MCF 10A (cell line): ENCODE measurements at regions of chr1 and their contacts with region 1.

Region 1: GRCh38 chr1:183915625-183916510 is 110.9 kb downstream of the RGL1 start:
- DNase-seq: peak; percentile 99
- H3K4me3 Mint-ChIP-seq: peak overlapping the region; percentile 27
- H3K27ac Mint-ChIP-seq: peak overlapping the region; percentile 55
- H3K4me1 Mint-ChIP-seq: peaks cover 13% of the 10 kb centered on the region
- H3K27me3 Mint-ChIP-seq: no peaks in the 10 kb centered on the region
- CTCF ChIP-seq: peak; percentile 90

Region 2: GRCh38 chr1:183609313-183609712 is 306.6 kb before region 1 on chr1:
- CTCF ChIA-PET with region 1: interaction called, 7 read pairs
- POLR2A ChIA-PET with region 1: interaction called, 6 read pairs
- intact Hi-C with region 1: loop called (anchors 1 kb)
- DNase-seq: peak; percentile 87
- H3K4me3 Mint-ChIP-seq: peak overlapping the region; percentile 38
- H3K27ac Mint-ChIP-seq: peak overlapping the region; percentile 99
- H3K4me1 Mint-ChIP-seq: peaks cover 31% of the 10 kb centered on the region
- H3K27me3 Mint-ChIP-seq: no peaks in the 10 kb centered on the region
- CTCF ChIP-seq: peak; percentile 69

Region 3: GRCh38 chr1:183646776-183647175 is 269.1 kb before region 1 on chr1:
- CTCF ChIA-PET with region 1: interaction called, 225 read pairs
- POLR2A ChIA-PET with region 1: interaction called, 3 read pairs
- intact Hi-C with region 1: no loop called
- DNase-seq: no peak
- H3K4me3 Mint-ChIP-seq: no peak overlapping the region
- H3K27ac Mint-ChIP-seq: no peak overlapping the region
- H3K4me1 Mint-ChIP-seq: no peaks in the 10 kb centered on the region
- H3K27me3 Mint-ChIP-seq: no peaks in the 10 kb centered on the region
- CTCF ChIP-seq: no peak

Region 4: DNA sequence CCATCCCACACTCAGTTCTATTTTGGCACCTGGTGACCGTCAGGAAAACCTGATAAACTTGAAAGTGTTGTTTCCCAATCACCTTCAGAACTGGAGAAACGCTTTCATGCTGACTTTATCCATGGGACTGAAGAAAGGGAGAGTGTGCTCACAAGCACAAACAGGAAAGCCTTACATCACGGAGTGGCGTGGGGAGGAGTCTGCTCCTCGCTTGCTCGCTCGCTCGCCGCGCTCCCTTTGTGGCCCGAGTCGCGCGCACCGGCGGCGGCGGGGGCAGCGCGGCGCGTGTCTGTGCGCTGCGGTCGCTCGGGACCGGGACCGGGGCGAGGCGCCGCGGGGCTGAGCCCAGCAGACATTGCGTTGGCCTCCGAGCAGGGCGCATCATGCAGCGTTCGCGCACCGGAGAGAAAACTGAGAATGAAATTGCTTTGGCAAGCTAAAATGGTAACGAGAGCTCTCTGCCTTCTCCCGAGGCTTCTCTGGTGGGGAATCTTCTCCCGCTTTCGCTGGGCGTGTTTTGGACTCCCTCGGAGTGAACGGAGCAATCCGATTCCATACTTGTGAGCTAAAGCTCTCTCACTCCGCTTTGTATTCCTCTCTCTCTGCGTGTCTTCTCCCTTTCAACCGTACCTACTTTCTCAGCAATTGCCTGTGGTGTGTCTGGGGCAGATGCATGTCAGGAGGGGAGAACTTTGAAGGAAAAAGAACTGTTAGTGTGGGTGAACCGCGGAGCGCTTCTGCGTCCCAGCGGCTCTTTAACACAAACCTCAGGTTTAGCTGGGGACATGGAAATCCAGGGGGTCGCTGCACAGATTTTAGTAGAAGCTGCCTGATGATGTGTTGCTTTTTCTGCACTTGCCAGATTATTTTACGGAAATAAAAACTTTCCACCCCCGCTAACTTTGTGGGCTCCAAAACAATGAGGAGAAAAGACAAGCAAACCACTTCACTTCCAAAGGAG is 110.7 kb before region 1 on chr1 and contains the start of gene RGL1:
- CTCF ChIA-PET with region 1: interaction called, 21 read pairs
- POLR2A ChIA-PET with region 1: interaction called, 3 read pairs
- intact Hi-C with region 1: no loop called
- DNase-seq: peak; percentile 73
- H3K4me3 Mint-ChIP-seq: peak within 1 kb of the TSS; percentile 84
- H3K27ac Mint-ChIP-seq: peak within 1 kb of the TSS; percentile 29
- H3K4me1 Mint-ChIP-seq: peaks cover 17% of the 10 kb centered on the region
- H3K27me3 Mint-ChIP-seq: no peaks in the 10 kb centered on the region
- CTCF ChIP-seq: no peak
- total RNA-seq, gene RGL1: 2.1 and 2.3 TPM in 2 replicates

Region 5: DNA sequence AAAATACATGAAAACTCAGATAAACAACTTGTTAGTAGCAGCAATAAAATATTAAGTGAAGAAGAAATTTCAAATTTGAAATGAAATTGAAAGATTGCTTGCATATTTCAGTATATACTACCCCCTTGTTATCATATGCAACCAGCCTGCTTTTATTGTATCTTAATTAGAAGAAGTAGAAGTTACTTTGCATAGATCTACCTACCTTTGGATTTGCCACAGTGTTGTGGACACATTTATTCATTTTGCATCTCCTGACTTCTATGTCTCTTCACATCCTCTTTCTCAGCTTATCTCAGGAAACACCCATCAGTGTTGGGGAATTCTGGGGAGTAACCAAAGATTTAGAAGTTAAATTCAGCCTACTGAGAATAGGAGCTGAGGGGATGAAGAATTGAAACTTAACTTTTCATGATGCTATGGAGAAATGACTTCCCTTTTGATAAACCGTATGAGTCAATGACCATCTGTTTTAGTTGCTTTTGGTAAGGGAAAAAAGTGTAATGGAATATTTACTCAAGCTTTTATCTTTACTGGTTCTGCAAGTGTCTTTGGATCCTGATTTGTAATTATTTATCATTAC is 14.0 kb before region 1 on chr1:
- CTCF ChIA-PET with region 1: interaction called, 29 read pairs
- POLR2A ChIA-PET with region 1: interaction called, 3 read pairs
- intact Hi-C with region 1: no loop called
- DNase-seq: no peak
- H3K4me3 Mint-ChIP-seq: no peak overlapping the region
- H3K27ac Mint-ChIP-seq: no peak overlapping the region
- H3K4me1 Mint-ChIP-seq: peaks cover under 1% of the 10 kb centered on the region
- H3K27me3 Mint-ChIP-seq: no peaks in the 10 kb centered on the region
- CTCF ChIP-seq: no peak

Region 6: DNA sequence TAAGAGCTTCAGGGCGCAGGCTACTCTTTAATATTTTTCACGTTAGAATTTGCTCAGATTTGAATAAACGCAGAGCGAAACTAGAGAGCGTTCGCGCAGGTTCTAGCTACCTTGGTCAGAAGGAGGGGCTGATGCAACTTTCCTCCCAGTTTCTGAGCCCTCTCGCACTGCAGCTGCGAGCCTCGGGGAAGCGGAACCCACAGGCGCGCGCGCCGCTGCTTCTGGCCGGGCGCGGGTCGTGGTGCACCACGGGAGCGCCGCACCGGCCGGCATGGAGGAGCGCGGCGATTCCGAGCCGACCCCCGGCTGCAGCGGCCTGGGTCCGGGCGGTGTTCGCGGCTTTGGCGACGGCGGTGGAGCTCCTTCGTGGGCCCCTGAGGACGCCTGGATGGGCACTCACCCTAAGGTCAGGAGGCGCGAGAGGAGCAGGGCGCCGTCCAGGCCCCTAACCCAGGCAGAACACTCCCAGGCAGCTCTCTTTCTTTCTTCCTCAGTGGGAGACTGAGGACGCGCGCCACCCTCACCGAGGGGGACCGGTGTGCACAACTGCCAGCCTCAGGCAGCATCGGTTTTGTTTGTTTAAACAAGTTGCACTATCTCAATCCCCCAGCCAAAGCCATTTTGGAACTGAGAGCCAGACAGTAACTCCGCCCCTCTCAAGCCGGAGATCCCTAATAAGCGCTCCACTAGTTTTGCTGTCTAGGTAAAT is 135.8 kb after region 1 on chr1 and contains the start of gene TSEN15:
- CTCF ChIA-PET with region 1: interaction called, 4 read pairs
- POLR2A ChIA-PET with region 1: interaction called, 10 read pairs
- intact Hi-C with region 1: no loop called
- DNase-seq: peak; percentile 94
- H3K4me3 Mint-ChIP-seq: peak within 1 kb of the TSS; percentile 93
- H3K27ac Mint-ChIP-seq: peak within 1 kb of the TSS; percentile 98
- H3K4me1 Mint-ChIP-seq: peaks cover 26% of the 10 kb centered on the region
- H3K27me3 Mint-ChIP-seq: peaks cover 22% of the 10 kb centered on the region
- CTCF ChIP-seq: no peak
- total RNA-seq, gene TSEN15: 88.7 and 97.5 TPM in 2 replicates

Region 7: GRCh38 chr1:184513966-184514365 is 598.1 kb after region 1 on chr1:
- CTCF ChIA-PET with region 1: no interaction called
- POLR2A ChIA-PET with region 1: no interaction called
- intact Hi-C with region 1: no loop called
- DNase-seq: peak; percentile 59
- H3K4me3 Mint-ChIP-seq: no peak overlapping the region
- H3K27ac Mint-ChIP-seq: no peak overlapping the region
- H3K4me1 Mint-ChIP-seq: no peaks in the 10 kb centered on the region
- H3K27me3 Mint-ChIP-seq: no peaks in the 10 kb centered on the region
- CTCF ChIP-seq: no peak